H1 (cell line): ENCODE measurements at regions of chr15 and their contacts with region 1.

Region 1: DNA sequence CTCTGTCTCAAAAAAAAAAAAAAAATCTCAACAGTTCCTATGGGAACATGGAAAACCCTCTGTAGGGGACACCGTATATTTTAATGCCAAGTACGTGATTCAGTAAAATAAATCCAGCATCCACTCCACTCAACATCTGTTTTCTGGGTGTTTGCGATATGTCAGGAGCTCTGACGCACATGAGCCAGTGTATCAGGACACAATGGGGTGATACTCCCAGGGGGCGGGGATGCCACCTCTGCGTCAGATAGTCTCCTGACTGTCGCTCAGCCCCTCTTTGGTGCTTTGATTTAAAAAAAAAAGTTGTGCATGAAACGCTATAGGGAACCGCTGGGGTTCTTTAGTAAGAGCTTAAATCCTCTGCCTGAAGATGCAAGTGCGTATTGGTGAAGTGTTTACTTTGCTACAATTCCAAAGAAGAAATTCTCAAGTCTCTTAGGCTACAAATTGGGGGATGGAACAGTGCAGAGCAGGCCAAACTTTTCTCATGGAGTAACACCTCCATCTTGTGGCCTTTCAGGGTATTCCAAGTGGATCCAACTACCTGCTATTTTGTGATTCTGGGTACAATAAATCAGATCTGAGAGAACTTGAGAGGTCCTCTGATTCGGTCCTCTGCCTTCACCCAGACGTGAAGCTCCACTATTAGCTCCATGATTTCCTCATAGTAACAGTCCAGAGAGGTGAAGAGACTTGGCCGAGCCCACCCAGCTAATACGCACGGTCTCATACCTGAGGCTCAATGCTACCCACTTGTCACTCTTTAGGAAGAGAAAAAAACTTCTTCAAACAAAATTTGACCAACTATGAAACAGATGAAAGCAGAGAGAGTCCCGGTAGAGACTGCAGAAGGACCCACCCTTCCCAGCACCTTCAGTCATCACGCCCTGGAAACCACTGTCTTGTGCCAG is 9.3 kb upstream of the NR2E3 start:
- DNase-seq: peak; percentile 21 to 77
- H3K4me3 ChIP-seq: no peak overlapping the region
- H3K27ac ChIP-seq: no peak overlapping the region
- H3K4me1 ChIP-seq: peaks cover 0 to 4% (median 1%) of the 10 kb centered on the region in 4 experiments; a peak in 3 of 7 replicates
- H3K27me3 ChIP-seq: no peaks in the 10 kb centered on the region
- CTCF ChIP-seq: peak in 2 of 3 experiments; percentile 84 to 86; a peak in 3 of 4 replicates
- EP300 ChIP-seq: no peak; a peak in 1 of 3 replicates
- POLR2A ChIP-seq: no peak
- RAD21 ChIP-seq: peak; percentile 95 to 98

Region 2: GRCh38 chr15:71386448-71387236 is 414.4 kb before region 1 on chr15:
- CTCF ChIA-PET with region 1: interaction called, 20 read pairs
- POLR2A ChIA-PET with region 1: interaction called, 4 read pairs
- DNase-seq: no peak
- H3K4me3 ChIP-seq: peak overlapping the region in 1 of 4 experiments; percentile 30; a peak in 3 of 8 replicates
- H3K27ac ChIP-seq: peak overlapping the region; percentile 5; the same call in 1 of the 2 replicates
- H3K4me1 ChIP-seq: peaks cover 15 to 24% (median 19%) of the 10 kb centered on the region in 4 experiments; a peak in 6 of 7 replicates
- H3K27me3 ChIP-seq: no peaks in the 10 kb centered on the region
- CTCF ChIP-seq: peak in 1 of 3 experiments; percentile 42; a peak in 1 of 4 replicates
- EP300 ChIP-seq: peak in 1 of 2 experiments; percentile 47; a peak in 1 of 3 replicates
- POLR2A ChIP-seq: no peak; a peak in 1 of 3 replicates
- RAD21 ChIP-seq: peak; percentile 72 to 75

Region 3: DNA sequence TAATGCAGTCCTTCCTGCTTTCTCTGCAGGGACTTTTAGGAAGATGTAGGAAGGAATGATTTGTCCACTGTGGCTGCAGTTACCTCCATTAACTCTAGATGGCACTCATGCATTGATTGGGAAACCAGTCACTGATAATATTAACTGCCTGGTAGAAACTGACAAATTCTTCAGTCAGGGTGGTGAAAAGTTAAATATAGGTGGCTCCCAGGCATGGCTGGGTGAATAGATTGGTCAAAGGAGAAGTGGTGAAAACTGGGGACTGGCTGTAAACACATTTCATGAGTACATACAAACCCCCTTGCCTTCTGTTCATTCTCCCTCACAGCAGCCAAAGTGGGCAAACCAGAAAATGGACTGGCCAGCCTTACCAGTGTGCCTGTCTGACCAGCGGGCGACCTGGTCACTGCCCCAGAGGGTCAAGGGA is 352.4 kb before region 1 on chr15:
- CTCF ChIA-PET with region 1: interaction called, 28 read pairs
- POLR2A ChIA-PET with region 1: no interaction called
- DNase-seq: peak; percentile 39 to 79
- H3K4me3 ChIP-seq: no peak overlapping the region
- H3K27ac ChIP-seq: no peak overlapping the region
- H3K4me1 ChIP-seq: peaks cover 0 to under 1% (median 0%) of the 10 kb centered on the region in 4 experiments; a peak in 2 of 7 replicates
- H3K27me3 ChIP-seq: no peaks in the 10 kb centered on the region
- CTCF ChIP-seq: peak in 2 of 3 experiments; percentile 73 to 90; a peak in 3 of 4 replicates
- EP300 ChIP-seq: no peak
- POLR2A ChIP-seq: no peak
- RAD21 ChIP-seq: peak; percentile 89 to 92

Region 4: DNA sequence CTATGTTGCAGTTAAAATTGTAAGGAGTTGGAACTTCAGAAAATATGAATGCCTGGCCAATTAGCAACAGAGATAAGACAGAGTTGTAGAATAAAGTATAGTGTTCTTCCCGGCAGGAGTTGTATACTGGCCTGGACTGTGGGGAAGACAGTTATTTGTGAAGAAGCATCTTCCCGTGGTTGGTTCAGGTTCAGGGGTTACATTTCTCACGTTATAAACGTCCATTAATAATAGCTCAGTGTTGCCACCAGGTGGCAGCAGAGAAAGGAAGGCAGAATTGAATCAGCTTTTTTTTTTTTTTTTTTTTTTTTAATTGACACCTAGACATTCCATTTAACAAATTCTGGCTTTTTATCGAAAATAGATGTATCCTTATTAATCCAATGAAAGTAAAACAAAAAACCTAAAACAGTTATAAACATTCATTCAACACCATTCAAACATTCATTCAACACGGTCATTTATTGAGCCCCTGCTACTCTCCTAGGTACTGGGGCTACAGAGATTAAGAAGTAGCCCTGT is 57.2 kb before region 1 on chr15:
- CTCF ChIA-PET with region 1: interaction called, 47 read pairs
- POLR2A ChIA-PET with region 1: no interaction called
- DNase-seq: peak in 1 of 2 experiments; percentile 60
- H3K4me3 ChIP-seq: no peak overlapping the region
- H3K27ac ChIP-seq: no peak overlapping the region
- H3K4me1 ChIP-seq: no peaks in the 10 kb centered on the region
- H3K27me3 ChIP-seq: no peaks in the 10 kb centered on the region
- CTCF ChIP-seq: peak in 2 of 3 experiments; percentile 60 to 62; a peak in 3 of 4 replicates
- EP300 ChIP-seq: no peak
- POLR2A ChIP-seq: no peak
- RAD21 ChIP-seq: peak; percentile 48 to 61

Region 5: GRCh38 chr15:71773206-71773859 is 27.8 kb before region 1 on chr15:
- CTCF ChIA-PET with region 1: interaction called, 20 read pairs
- POLR2A ChIA-PET with region 1: no interaction called
- DNase-seq: no peak
- H3K4me3 ChIP-seq: no peak overlapping the region
- H3K27ac ChIP-seq: no peak overlapping the region
- H3K4me1 ChIP-seq: no peaks in the 10 kb centered on the region; a peak in 1 of 7 replicates
- H3K27me3 ChIP-seq: no peaks in the 10 kb centered on the region
- CTCF ChIP-seq: no peak
- EP300 ChIP-seq: no peak
- POLR2A ChIP-seq: no peak
- RAD21 ChIP-seq: no peak

Region 6: GRCh38 chr15:71786673-71787072 is 14.4 kb before region 1 on chr15:
- CTCF ChIA-PET with region 1: interaction called, 62 read pairs
- POLR2A ChIA-PET with region 1: no interaction called
- DNase-seq: peak in 1 of 2 experiments; percentile 22
- H3K4me3 ChIP-seq: no peak overlapping the region
- H3K27ac ChIP-seq: no peak overlapping the region
- H3K4me1 ChIP-seq: no peaks in the 10 kb centered on the region; a peak in 1 of 7 replicates
- H3K27me3 ChIP-seq: no peaks in the 10 kb centered on the region
- CTCF ChIP-seq: no peak
- EP300 ChIP-seq: no peak
- POLR2A ChIP-seq: no peak
- RAD21 ChIP-seq: no peak

Region 7: DNA sequence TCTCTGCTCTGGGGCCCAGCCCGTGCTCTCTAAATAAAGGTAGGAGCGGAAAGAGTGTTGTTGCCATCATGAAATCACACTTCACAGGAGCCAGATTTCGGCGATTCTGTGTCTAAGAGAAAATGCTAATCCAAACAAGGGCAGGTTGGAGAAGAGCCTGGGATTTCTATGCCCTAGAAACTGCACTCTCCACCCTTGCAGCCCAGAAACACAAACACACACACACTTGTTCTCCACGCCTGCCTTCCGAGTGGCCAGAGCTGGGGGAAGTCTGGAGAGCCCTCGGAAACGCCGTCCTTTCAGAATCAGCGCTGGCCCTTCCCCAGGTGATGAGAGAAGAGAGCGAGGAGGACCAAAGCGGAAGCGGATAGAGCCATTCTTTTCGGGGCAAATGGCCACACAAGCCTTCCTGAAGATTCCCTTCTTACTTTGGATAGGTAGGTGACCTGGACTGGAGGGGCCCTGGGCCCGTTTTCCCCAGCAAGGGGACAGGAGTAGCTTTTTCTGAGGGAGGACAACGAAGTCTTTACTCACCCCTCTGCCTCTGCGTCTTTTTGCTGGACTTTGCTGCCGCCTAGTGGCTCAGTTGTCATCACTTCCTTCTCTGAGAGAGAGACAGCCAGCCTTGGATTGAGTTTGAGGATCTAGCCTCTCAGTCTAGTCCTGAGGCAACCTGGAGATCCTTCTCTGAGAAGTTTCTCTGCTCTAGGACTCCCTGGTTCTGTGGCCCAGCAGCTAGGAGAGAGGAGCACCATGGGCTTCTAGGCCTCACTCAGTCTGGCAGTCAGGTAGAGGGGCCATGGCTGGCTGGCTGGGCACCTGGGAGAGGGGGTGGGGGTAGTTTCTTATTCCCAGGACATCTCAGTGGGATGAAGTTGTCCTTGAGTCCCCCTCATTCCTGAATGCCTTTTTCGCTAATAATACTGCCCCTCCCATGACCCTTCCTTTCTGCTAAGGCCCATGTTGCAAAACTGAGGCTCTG is 354.8 kb after region 1 on chr15:
- CTCF ChIA-PET with region 1: interaction called, 21 read pairs
- POLR2A ChIA-PET with region 1: no interaction called
- DNase-seq: peak; percentile 27 to 92
- H3K4me3 ChIP-seq: peak overlapping the region in 3 of 4 experiments; percentile 10 to 40 (median 16); a peak in 3 of 8 replicates
- H3K27ac ChIP-seq: no peak overlapping the region
- H3K4me1 ChIP-seq: no peaks in the 10 kb centered on the region
- H3K27me3 ChIP-seq: peaks cover 0 to 4% (median 0%) of the 10 kb centered on the region in 4 experiments; a peak in 2 of 7 replicates
- CTCF ChIP-seq: peak; percentile 64 to 95 (median 88)
- EP300 ChIP-seq: no peak
- POLR2A ChIP-seq: no peak
- RAD21 ChIP-seq: peak; percentile 97 to 98